K562 (cell line): ENCODE measurements at regions of chr1 and their contacts with region 1.

Region 1: DNA sequence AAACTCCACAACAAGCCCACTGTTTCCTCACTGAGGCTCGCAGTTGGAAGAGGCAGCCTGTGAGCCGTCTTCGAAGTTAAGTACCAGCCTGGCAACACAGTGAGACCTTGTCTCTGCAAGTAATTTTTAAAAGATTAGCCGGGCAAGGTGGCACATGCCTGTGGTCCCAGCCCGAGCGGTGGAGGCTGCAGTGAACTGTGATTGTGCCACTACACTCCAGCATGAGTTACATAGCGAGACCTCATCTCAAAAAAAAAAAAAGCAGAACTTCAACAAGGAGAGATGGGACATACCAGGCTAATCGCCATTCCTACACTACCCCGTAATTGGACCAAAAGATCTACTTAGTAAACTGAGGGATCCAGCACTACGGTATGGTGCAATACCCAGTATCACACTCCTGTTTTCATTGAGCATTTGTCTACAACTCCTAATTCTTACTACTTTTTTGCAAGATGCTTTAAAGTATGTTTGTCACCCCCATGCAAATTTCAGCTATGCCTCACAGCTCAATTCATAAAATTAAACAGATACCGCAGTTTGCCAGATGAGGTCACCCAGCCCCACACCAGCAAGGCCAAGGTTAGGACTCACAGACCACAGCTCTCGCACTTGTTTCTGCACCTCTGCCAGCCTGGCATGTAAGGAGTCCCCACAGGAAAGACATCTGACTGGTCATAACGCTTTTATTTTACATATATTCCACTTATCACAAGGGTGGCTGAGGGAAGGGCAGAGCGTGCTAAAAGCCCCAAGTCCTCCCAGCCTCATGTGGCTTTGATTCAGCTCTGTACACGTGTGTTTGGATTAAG is 21.0 kb downstream of the SDE2 start:
- DNase-seq: peak in 1 of 4 experiments; percentile 35
- ATAC-seq: peak; percentile 19
- H3K4me3 ChIP-seq: no peak overlapping the region
- H3K27ac ChIP-seq: no peak overlapping the region
- H3K4me1 ChIP-seq: peaks cover 1 to 7% of the 10 kb centered on the region in 2 experiments; a peak in 4 of 5 replicates
- H3K27me3 ChIP-seq: no peaks in the 10 kb centered on the region
- CTCF ChIP-seq: peak in 2 of 3 experiments; percentile 25 to 33; a peak in 1 of 6 replicates
- EP300 ChIP-seq: no peak
- POLR2A ChIP-seq: 0 out of 2 replicates have a peak, but pooled peaks have one; percentile 15
- RAD21 ChIP-seq: peak in 1 of 2 experiments; percentile 39; a peak in 2 of 4 replicates

Region 2: DNA sequence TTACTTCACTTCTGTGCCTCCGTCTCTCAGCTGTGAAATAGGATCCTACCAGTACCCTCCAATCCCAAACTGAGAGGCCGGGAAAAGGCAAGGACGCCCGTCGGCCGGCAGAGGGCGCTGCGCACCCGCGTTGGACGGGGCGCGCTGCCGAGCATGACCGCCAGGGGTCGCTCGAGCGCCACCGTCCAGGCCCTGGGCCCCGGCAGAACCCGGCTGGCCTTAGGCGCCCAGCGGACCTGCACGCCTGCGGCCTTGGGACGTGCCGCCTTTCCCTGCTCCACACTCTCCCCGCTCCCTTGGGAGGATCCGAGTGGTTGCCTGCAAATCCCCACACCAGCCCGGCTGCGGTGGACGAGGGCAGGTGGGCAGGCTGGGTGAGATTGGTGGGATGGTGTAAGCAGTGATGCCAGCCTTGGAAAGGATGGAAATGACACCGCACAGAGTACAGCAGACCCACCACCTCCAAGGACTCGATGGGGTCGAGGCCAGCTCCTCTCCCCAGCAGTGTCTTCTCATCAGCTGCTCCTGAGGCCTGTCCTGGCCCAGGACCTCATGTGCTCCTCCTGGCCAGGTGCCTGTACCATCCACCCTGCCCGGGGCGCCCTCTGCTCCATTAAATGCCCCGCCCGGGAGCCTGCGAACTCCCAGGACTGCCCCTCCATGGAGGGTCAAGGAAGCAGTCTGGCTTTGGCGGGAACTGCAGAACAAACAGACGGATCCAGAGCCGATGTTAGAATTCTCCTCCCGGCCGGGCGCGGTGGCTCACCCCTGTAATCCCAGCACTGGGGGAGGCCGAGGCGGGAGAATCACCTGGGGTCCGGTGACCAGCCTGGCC is 502.9 kb before region 1 on chr1:
- CTCF ChIA-PET with region 1: interaction called, 133 read pairs
- POLR2A ChIA-PET with region 1: no interaction called
- in situ Hi-C with region 1: loop called (anchors 5 kb)
- intact Hi-C with region 1: loop called (anchors 1 kb)
- DNase-seq: peak; percentile 81 to 94 (median 91)
- ATAC-seq: peak; percentile 90
- H3K4me3 ChIP-seq: no peak overlapping the region
- H3K27ac ChIP-seq: no peak overlapping the region
- H3K4me1 ChIP-seq: peaks cover 0 to 16% of the 10 kb centered on the region in 2 experiments; a peak in 3 of 5 replicates
- H3K27me3 ChIP-seq: peaks cover 15 to 34% of the 10 kb centered on the region in 2 experiments; a peak in 4 of 5 replicates
- CTCF ChIP-seq: peak; percentile 100
- EP300 ChIP-seq: no peak
- POLR2A ChIP-seq: no peak
- RAD21 ChIP-seq: peak; percentile 100

Region 3: DNA sequence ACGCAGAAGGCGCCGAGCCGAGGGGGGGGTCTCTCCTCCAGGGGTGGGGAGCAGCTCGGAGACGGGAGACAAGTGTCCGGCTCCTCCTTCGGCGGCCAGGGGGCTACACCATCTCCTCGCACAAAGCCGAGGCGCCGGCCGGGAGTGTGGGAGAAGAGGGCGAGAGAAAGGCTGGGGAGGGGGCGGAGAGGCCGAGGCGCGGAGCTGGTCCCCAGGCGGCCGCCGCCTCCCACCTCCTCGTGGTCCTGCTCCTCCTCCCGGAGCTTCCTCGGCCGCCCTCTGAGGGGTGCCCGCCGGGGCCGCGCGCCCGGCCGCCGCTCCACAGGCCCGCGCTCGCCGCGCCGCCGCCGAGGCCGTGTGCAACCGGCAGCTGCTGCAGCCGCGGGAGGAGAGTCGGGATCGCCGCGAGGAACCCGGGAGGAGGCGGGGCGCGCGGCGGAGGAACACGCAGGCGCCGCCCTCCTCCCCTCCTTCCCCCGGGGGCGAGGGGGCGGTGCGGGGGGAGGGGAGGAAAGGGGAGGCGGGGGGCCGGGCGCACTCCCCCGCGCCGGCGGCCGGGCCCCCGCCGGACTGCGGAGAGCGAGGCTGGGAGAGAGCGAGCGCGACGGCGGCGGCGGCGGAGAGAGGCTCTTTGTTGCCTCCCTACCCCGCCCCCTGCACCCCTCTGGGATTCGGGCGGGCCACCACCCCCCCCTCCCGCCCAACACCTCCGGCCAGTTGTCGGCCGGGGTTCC is 325.2 kb before region 1 on chr1 and contains the start of gene ENAH:
- CTCF ChIA-PET with region 1: no interaction called
- POLR2A ChIA-PET with region 1: no interaction called
- in situ Hi-C with region 1: no loop called
- intact Hi-C with region 1: loop called (anchors 10 kb)
- DNase-seq: peak; percentile 67 to 93 (median 82)
- ATAC-seq: peak; percentile 88
- H3K4me3 ChIP-seq: peak within 1 kb of the TSS; percentile 26
- H3K27ac ChIP-seq: no peak within 1 kb of the TSS
- H3K4me1 ChIP-seq: peaks cover 0 to 16% of the 10 kb centered on the region in 2 experiments; a peak in 2 of 5 replicates
- H3K27me3 ChIP-seq: peaks cover 33 to 35% of the 10 kb centered on the region in 2 experiments
- CTCF ChIP-seq: no peak
- EP300 ChIP-seq: no peak
- POLR2A ChIP-seq: no peak
- RAD21 ChIP-seq: no peak
- polyA plus RNA-seq, gene ENAH: 0.03 to 0.13 TPM

Region 4: DNA sequence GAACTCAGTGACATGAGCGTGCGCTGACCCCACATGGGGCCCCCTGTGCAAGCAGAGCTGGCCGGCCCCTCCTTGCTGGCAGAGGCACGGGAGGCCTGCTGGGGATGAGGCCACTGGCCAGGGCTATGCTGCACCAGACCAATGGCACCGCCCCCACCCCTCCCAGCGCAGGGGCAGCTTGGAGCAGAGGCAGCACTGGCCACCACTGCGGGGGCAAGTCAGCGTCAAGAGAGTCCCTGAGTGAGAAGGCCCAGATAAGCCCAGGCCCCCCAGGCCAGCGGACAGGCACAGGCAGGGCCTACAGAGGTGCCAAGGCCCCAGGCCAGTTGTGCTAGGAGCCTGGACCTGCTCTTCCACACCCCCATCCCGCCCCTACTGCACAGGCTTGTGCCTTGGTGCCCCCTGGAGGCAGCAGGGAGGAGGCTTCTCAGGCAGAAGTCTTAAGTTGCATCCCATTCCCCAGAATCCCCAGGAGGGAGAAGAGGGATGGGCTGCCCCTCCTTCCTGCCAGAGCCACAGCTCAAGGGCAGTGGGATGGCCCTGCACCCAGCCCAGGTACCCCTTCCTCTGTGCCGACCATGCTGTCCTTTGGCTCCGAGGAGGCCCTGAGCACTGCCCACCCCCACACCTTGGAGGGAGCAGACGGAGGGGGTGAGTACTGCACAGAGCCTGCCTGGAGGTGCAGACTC is 132.4 kb before region 1 on chr1:
- CTCF ChIA-PET with region 1: interaction called, 3 read pairs
- POLR2A ChIA-PET with region 1: no interaction called
- in situ Hi-C with region 1: no loop called
- intact Hi-C with region 1: loop called (anchors 10 kb)
- DNase-seq: peak; percentile 78 to 87 (median 82)
- ATAC-seq: peak; percentile 90
- H3K4me3 ChIP-seq: no peak overlapping the region
- H3K27ac ChIP-seq: no peak overlapping the region
- H3K4me1 ChIP-seq: peaks cover 9 to 42% of the 10 kb centered on the region in 2 experiments; a peak in 4 of 5 replicates
- H3K27me3 ChIP-seq: no peaks in the 10 kb centered on the region
- CTCF ChIP-seq: peak; percentile 85 to 91 (median 90)
- EP300 ChIP-seq: no peak
- POLR2A ChIP-seq: no peak; the same call in 1 of the 2 replicates
- RAD21 ChIP-seq: peak; percentile 82 to 87

Region 5: GRCh38 chr1:225874431-225874830 is 103.7 kb before region 1 on chr1:
- CTCF ChIA-PET with region 1: no interaction called
- POLR2A ChIA-PET with region 1: no interaction called
- in situ Hi-C with region 1: no loop called
- intact Hi-C with region 1: no loop called
- DNase-seq: no peak
- ATAC-seq: no peak
- H3K4me3 ChIP-seq: no peak overlapping the region
- H3K27ac ChIP-seq: no peak overlapping the region
- H3K4me1 ChIP-seq: peaks cover 3 to 7% of the 10 kb centered on the region in 2 experiments; a peak in 3 of 5 replicates
- H3K27me3 ChIP-seq: no peaks in the 10 kb centered on the region
- CTCF ChIP-seq: no peak
- EP300 ChIP-seq: no peak
- POLR2A ChIP-seq: no peak
- RAD21 ChIP-seq: no peak